Head of caudate nucleus (tissue), 42 donors: ENCODE measurements at regions of chr17 and their contacts with region 1.

Region 1: GRCh38 chr17:60442271-60443173 is 20.2 kb downstream of the CHCT1 start:
- DNase-seq: peak in 4 of 42 donors; percentile 23 to 56 (median 39)

Region 2: GRCh38 chr17:60481604-60482003 is 39.1 kb after region 1 on chr17:
- intact Hi-C with region 1: loop called (anchors 5 kb)
- DNase-seq: peak in 5 of 42 donors; percentile 20 to 67 (median 42)

Region 3: DNA sequence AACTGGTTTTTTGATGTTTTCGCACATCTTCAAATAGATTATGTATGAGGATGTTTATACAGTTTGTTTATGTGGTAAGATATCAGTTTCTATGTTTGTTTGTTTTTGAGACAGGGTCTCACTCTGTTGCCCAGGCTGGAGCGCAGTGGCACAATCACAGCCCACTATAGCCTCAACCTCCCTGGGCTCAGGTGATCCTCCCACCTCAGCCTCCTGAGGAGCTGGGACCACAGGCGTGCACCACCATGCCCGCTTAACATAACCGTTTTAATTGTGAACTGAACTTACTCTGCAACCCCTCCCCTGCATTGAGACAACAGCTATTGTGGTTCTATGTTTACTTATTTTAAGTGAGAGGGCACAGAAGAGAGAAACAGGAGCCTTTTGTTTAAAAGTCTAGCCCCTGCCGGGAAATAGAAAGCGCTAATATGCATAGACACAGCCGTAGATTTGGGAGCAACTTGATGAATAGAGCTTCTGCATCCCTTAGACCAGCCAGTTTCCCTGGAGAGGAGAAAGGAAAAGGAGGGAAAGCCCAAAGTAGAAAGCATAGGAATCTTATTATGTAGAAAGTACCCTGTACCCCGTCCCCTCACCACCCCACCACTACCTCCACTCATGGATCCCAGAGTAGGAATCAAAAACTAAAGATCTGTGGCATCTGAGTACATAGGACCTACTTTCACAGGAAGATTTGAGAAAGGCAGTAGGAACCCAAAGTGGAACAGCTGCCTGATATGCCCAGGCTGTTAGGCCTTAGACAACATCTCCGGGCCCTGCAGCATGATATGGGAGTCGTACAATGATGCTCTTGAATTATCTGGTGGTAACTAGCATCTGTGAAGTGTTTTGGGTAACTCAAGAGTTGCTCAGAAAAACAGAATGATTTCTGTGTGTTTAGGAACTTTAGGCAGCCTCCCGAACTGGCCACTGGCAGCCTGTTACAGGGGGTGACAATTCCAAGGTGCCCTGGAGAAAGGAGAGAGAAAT is 103.2 kb after region 1 on chr17:
- intact Hi-C with region 1: no loop called
- DNase-seq: peak in 1 of 42 donors; percentile 8